Dorsolateral prefrontal cortex (tissue), 120 donors: ENCODE measurements at regions of chr2 and their contacts with region 1.

Region 1: DNA sequence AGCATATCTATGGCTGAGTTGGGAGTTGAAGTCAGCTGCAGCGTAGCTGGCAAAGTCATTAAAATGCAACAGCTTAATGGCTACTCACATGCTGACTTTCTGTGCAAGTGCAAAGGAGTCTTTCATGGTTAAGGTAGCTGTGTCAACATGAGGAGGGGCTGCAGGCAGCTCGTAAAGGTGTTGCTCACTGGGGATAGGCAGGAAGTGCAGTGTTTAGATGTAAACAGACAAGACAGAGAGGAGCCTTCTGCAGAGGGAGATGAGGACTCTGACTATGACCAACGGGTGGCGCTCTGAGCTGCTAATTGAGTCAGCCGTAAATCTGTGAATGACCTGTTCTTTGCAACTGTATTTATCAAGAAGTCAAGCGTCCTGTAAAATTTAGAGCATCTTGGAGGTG is 22.3 kb upstream of the CAVIN2 start:
- DNase-seq: peak in 8 of 10 donors; percentile 9 to 75 (median 56)
- H3K4me3 ChIP-seq: peak overlapping the region in 2 of 59 donors; percentile 2 to 4
- H3K27ac ChIP-seq: peak overlapping the region in 1 of 59 donors; percentile 40
- H3K27me3 ChIP-seq: no peaks in the 10 kb centered on the region
- CTCF ChIP-seq: peak in 45 of 56 donors; percentile 7 to 63 (median 37)

Region 2: DNA sequence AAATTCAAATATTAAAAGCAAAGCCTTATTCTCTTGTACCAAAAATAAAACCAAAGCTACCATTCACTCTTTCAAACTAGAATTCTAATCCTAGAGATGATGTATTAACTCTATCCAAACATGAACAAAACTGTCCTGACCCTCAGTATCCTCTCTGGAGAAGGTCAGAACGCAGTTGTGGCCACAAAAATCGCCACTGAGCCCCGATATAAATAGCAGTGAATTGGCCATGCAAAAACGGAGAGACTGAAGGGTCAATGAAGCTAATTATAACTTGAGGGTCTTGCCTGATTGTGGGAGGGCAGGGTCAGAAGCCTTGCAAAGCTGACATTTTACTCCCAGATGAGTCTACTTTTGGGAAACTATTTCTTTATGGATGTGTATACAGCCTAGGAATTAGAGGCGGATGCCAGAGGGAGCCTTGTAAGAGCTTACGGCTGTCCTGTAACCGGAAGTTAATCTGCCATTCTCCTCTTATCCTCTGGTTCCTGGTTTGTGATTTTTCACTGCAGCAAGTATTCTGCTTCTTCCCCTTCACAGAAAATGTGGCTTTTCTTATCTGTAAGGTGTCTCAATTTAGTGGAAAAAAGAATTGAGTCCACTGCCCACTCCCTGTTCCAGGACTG is 50.3 kb before region 1 on chr2:
- intact Hi-C with region 1: loop called in 1 of 2 experiments (anchors 5 kb)
- DNase-seq: no peak
- H3K4me3 ChIP-seq: peak overlapping the region in 9 of 59 donors; percentile 1 to 38 (median 18)
- H3K27ac ChIP-seq: peak overlapping the region in 3 of 59 donors; percentile 10 to 42 (median 10)
- H3K27me3 ChIP-seq: no peaks in the 10 kb centered on the region
- CTCF ChIP-seq: no peak

Region 3: GRCh38 chr2:192162392-192163042 is 293.3 kb after region 1 on chr2:
- intact Hi-C with region 1: loop called (anchors 5 kb)
- DNase-seq: peak in 6 of 10 donors; percentile 32 to 80 (median 61)
- H3K4me3 ChIP-seq: peak overlapping the region in 9 of 59 donors; percentile 5 to 39 (median 13)
- H3K27ac ChIP-seq: peak overlapping the region in 40 of 59 donors; percentile 3 to 74 (median 38)
- H3K27me3 ChIP-seq: peaks cover 0 to 3% (median 0%) of the 10 kb centered on the region in 45 donors
- CTCF ChIP-seq: peak; percentile 82 to 98 (median 94)

Region 4: DNA sequence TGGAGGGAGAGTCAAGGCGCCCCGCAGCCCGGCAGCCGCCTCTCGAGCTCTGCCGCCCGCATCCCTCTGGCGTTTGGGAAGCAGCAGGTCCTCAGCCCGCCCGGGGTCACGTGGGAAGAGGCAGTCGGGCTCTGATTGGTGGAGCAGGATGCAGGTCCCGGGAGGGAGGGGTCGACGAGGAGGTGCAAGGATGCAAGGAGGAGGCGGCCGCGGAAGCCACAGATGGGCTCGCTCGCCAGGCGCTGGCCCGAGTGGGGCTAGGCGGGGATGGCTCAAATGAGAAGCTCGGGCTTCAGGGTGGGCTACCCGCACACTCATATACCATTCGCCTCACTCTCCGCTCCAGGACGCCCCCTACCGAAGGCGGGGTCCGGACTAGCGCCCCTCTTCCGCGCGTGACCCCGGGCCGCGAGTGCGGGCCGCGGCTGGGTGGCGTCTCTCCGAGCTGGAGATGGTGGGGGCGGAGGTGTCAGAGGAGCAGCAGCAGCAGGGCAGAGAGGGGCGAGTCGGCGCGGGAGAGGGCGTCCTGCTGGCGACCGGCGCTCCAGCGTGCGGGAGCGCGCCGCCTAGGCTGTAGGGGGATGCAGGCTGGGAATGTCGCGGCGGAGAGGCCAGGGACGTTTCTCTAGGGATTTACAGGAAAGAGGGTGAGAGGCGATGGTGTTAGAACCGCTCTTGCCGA is 325.8 kb after region 1 on chr2 and contains the start of gene TMEFF2:
- intact Hi-C with region 1: loop called in 1 of 2 experiments (anchors 10 kb)
- DNase-seq: peak; percentile 99 to 100 (median 99)
- H3K4me3 ChIP-seq: peak within 1 kb of the TSS; percentile 58 to 93 (median 78)
- H3K27ac ChIP-seq: peak within 1 kb of the TSS; percentile 84 to 98 (median 96)
- H3K27me3 ChIP-seq: peaks cover 0 to 32% (median 0%) of the 10 kb centered on the region in 45 donors
- CTCF ChIP-seq: peak in 55 of 56 donors; percentile 18 to 83 (median 51)
- total RNA-seq, gene TMEFF2: 13.6 to 71.1 (median 44.6) TPM